ENCODE measurements at regions of chr19 and their contacts with region 1.

Region 1: GRCh38 chr19:58380722-58381466 is at the start of gene ZNF837:
- DNase-seq: peak; percentile 90 to 100 (median 98)
- ATAC-seq: peak; percentile 93
- H3K4me3 ChIP-seq: peak within 1 kb of the TSS; percentile 97
- H3K4me3 Mint-ChIP-seq: peak within 1 kb of the TSS; percentile 87 to 98 (median 91)
- H3K27ac ChIP-seq: peak within 1 kb of the TSS; percentile 96
- H3K27ac Mint-ChIP-seq: peak within 1 kb of the TSS; percentile 93 to 97 (median 97)
- H3K4me1 ChIP-seq: peaks cover 21 to 25% of the 10 kb centered on the region in 2 donors
- H3K4me1 Mint-ChIP-seq: peaks cover 23 to 40% (median 34%) of the 10 kb centered on the region in 7 donors
- H3K27me3 ChIP-seq: no peaks in the 10 kb centered on the region
- H3K27me3 Mint-ChIP-seq: no peaks in the 10 kb centered on the region
- total RNA-seq, gene ZNF837: 1.4 to 4.3 (median 2.4) TPM

Region 2: GRCh38 chr19:57279418-57280066 is 1101.4 kb before region 1 on chr19:
- CTCF ChIA-PET with region 1: no interaction called
- POLR2A ChIA-PET with region 1: no interaction called
- intact Hi-C with region 1: loop called in 1 of 2 experiments (anchors 2 kb)
- DNase-seq: peak in 6 of 9 donors; percentile 60 to 81 (median 78)
- ATAC-seq: peak; percentile 85
- H3K4me3 ChIP-seq: peak overlapping the region; percentile 80
- H3K4me3 Mint-ChIP-seq: no peak overlapping the region
- H3K27ac ChIP-seq: peak overlapping the region; percentile 98
- H3K27ac Mint-ChIP-seq: peak overlapping the region in 2 of 9 donors; percentile 6 to 51
- H3K4me1 ChIP-seq: peaks cover 18 to 23% of the 10 kb centered on the region in 2 donors
- H3K4me1 Mint-ChIP-seq: peaks cover 7 to 33% (median 25%) of the 10 kb centered on the region in 7 donors
- H3K27me3 ChIP-seq: no peaks in the 10 kb centered on the region
- H3K27me3 Mint-ChIP-seq: no peaks in the 10 kb centered on the region

Region 3: DNA sequence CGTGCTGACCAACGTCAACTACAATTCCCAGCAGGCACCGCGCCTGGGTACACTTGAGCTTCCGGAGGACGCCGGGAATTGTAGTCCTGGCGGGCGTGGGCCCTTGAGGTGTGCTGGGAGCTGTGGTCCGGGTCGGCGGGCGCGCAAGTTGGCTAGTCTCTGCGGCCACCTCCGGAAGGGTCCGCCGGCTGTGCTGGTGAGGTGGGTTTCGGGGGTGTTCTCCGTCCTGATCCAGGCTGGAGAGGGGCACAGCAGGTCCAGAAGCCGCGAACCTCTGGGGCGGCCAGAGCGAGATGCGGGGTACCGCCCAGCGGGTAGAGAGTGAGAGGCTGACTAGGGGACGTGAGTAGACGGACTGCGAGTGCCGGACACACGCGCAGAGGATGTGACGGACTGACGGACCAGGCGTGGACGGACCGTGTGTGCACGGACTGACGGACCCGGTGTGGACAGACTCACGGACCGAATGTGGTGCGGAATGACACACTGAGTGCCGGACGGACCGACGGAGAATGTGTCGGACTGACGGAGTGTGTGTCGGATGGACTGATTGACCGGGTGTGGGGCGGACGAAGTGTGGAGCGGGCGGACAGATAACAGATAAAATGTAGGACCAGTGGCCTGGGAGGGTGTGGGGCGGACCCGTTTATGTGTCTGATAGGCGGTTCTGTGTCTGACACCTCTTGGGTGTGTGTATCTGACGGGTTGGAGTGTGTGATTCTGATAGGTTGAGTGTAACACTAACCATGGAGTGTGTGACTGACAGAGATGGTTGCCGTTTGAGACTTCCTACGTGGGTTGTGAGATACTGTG is 53.8 kb before region 1 on chr19 and contains the start of gene ZSCAN22:
- CTCF ChIA-PET with region 1: no interaction called
- POLR2A ChIA-PET with region 1: no interaction called
- intact Hi-C with region 1: loop called (anchors 1 kb)
- DNase-seq: peak; percentile 65 to 89 (median 78)
- ATAC-seq: peak; percentile 90
- H3K4me3 ChIP-seq: peak within 1 kb of the TSS; percentile 95
- H3K4me3 Mint-ChIP-seq: no peak within 1 kb of the TSS
- H3K27ac ChIP-seq: peak within 1 kb of the TSS; percentile 72
- H3K27ac Mint-ChIP-seq: no peak within 1 kb of the TSS
- H3K4me1 ChIP-seq: peaks cover 14 to 16% of the 10 kb centered on the region in 2 donors
- H3K4me1 Mint-ChIP-seq: peaks cover 0 to 10% (median 6%) of the 10 kb centered on the region in 7 donors
- H3K27me3 ChIP-seq: no peaks in the 10 kb centered on the region
- H3K27me3 Mint-ChIP-seq: no peaks in the 10 kb centered on the region
- total RNA-seq, gene ZSCAN22: 1.1 to 6.0 (median 4.5) TPM

Region 4: DNA sequence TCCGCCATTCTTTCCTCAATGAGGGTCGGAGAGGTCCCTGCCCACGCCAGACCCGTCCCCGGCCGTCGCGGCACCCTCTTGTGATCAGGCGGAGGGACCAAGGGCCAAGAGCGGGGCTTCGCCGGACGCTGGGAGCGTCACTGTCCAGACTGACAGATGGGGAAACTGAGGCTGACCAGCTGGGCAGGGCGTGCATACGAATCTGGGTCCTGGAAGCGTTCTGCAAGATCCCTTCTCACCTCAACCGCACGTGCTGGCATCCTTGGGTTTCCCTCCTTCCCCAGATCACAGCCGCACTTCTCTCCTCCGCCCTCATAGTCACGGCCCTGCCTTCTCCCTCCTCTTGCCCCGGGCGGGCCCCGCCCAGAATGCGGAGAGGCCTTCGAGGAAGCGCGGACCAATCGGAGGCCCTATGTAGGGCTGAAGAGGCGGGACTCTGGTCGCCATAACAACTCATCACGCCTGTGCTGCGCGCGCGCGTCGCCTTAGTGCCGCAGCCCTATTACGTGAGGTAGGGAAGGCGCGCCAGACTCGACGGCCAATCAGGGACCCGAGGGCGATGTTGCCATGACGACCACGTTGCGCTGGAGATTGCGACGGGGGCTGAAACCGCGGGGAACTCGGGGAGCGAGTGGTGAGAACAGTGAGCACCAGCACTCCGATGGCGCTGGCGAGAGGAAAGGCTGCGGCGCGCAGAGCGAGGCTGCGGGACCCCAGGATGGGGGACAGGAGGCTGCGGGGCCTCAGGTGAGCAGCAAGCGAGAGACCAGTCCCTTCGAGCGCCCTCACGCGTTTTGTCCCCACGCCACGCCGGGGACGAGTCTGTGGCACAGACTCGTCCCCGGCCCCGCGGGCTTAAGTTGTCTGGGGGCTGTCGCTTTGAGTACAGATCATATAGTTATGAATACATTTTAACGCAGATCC is 20.3 kb after region 1 on chr19:
- CTCF ChIA-PET with region 1: no interaction called
- POLR2A ChIA-PET with region 1: interaction called, 4 read pairs
- intact Hi-C with region 1: loop called (anchors 1 kb)
- DNase-seq: peak; percentile 96 to 100 (median 98)
- ATAC-seq: peak; percentile 97
- H3K4me3 ChIP-seq: peak overlapping the region; percentile 77
- H3K4me3 Mint-ChIP-seq: peak overlapping the region; percentile 86 to 98 (median 94)
- H3K27ac ChIP-seq: peak overlapping the region; percentile 91
- H3K27ac Mint-ChIP-seq: peak overlapping the region; percentile 88 to 97 (median 94)
- H3K4me1 ChIP-seq: peaks cover 6 to 13% of the 10 kb centered on the region in 2 donors
- H3K4me1 Mint-ChIP-seq: peaks cover 6 to 19% (median 8%) of the 10 kb centered on the region in 7 donors
- H3K27me3 ChIP-seq: peaks cover 0 to 3% of the 10 kb centered on the region in 2 donors
- H3K27me3 Mint-ChIP-seq: peaks cover 5 to 20% (median 7%) of the 10 kb centered on the region in 5 donors

Region 5: DNA sequence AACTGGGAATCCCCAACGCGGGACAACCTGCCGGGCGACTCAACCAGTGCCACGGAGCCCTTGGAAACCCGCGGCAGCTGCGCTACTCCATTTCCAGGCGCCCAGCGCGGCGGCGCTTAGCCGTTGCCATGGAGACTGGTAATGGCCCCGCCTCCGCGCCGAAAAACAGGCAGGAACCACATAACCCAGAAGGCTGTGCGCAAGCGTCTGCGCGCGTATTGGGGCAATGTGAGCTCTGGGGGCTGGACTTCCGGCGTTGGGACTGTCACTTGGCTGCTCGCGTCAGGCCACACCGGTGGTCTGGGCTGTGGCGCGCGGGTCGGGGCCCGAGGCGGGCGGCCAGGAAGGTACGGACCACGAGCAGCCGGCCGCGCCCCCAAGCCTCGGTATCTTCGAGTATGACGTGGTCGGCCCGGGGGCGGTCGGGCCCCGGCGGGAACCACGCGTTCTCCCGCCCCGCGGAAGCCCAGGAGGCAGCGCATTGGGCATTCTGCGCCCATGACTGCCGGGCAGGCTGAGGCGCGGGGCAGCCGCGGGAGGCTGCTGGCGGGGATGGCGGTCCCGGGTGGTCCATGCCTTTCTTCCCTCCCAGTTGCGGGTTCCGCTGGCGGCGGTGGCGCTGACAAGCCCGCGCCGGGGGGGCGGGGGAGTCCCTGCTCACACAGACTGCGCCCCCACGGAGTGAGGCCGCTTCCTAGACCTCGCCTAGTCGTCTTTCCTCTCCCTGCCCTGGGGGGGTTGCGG is 70.6 kb after region 1 on chr19 and contains the start of gene ZNF324B:
- CTCF ChIA-PET with region 1: interaction called, 3 read pairs
- POLR2A ChIA-PET with region 1: no interaction called
- intact Hi-C with region 1: loop called (anchors 1 kb)
- DNase-seq: peak; percentile 90 to 97 (median 94)
- ATAC-seq: peak; percentile 99
- H3K4me3 ChIP-seq: peak within 1 kb of the TSS; percentile 63
- H3K4me3 Mint-ChIP-seq: peak within 1 kb of the TSS; percentile 85 to 98 (median 88)
- H3K27ac ChIP-seq: peak within 1 kb of the TSS; percentile 81
- H3K27ac Mint-ChIP-seq: peak within 1 kb of the TSS in 8 of 9 donors; percentile 2 to 90 (median 71)
- H3K4me1 ChIP-seq: peaks cover 0 to 4% of the 10 kb centered on the region in 2 donors
- H3K4me1 Mint-ChIP-seq: peaks cover 12 to 23% (median 19%) of the 10 kb centered on the region in 7 donors
- H3K27me3 ChIP-seq: no peaks in the 10 kb centered on the region
- H3K27me3 Mint-ChIP-seq: peaks cover 8 to 26% (median 17%) of the 10 kb centered on the region in 5 donors
- total RNA-seq, gene ZNF324B: 9.1 to 13.9 (median 11.8) TPM

Region 6: DNA sequence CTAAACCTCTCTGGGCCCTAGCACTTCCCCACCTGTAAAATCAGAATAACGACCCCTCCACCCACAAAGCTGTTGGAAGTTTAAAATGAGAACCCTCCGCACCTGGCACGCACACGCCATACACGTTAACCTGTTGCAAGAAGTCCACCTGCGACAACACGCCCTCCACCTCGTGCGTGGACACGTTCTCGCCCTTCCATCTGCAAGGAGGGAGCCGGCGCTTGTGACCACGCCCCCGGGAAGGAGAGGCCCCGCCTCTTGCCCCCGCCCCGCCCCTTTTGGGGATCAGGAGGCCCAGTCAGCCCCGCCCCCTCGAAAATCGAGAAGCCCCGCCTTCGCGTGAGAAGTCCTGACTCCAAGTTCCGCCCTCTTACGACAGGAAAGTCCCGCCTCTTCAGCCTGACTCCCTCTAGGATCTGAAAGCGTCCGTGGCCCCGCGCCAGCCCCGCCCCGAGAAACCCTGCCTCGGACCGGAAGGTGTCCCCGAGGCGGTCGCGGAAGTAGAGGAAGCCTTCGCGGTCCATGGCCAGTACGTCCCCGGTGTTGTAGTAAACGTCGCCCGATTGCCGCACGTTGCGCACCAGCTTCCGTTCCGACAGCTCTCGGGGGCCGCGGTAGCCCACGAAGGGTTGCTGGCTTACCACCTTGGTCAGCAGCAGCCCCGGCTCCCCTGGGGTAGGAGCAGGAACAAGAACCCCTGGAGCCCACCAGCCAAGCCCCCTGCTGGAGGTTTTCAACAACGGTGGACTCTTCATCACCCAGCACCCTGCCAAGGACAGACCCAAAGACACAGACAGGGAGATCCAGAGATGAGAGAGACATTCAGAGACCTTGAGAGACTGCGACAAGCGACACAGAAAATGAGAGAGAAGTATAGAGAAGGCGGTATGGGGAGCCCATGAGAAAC is 118.4 kb after region 1 on chr19:
- CTCF ChIA-PET with region 1: no interaction called
- POLR2A ChIA-PET with region 1: interaction called, 3 read pairs
- intact Hi-C with region 1: loop called in 1 of 2 experiments (anchors 1 kb)
- DNase-seq: peak; percentile 76 to 96 (median 87)
- ATAC-seq: peak; percentile 93
- H3K4me3 ChIP-seq: peak overlapping the region; percentile 66
- H3K4me3 Mint-ChIP-seq: peak overlapping the region; percentile 88 to 98 (median 94)
- H3K27ac ChIP-seq: peak overlapping the region; percentile 72
- H3K27ac Mint-ChIP-seq: peak overlapping the region; percentile 90 to 97 (median 95)
- H3K4me1 ChIP-seq: peaks cover 12 to 15% of the 10 kb centered on the region in 2 donors
- H3K4me1 Mint-ChIP-seq: peaks cover 8 to 32% (median 21%) of the 10 kb centered on the region in 7 donors
- H3K27me3 ChIP-seq: no peaks in the 10 kb centered on the region
- H3K27me3 Mint-ChIP-seq: no peaks in the 10 kb centered on the region

Region 7: DNA sequence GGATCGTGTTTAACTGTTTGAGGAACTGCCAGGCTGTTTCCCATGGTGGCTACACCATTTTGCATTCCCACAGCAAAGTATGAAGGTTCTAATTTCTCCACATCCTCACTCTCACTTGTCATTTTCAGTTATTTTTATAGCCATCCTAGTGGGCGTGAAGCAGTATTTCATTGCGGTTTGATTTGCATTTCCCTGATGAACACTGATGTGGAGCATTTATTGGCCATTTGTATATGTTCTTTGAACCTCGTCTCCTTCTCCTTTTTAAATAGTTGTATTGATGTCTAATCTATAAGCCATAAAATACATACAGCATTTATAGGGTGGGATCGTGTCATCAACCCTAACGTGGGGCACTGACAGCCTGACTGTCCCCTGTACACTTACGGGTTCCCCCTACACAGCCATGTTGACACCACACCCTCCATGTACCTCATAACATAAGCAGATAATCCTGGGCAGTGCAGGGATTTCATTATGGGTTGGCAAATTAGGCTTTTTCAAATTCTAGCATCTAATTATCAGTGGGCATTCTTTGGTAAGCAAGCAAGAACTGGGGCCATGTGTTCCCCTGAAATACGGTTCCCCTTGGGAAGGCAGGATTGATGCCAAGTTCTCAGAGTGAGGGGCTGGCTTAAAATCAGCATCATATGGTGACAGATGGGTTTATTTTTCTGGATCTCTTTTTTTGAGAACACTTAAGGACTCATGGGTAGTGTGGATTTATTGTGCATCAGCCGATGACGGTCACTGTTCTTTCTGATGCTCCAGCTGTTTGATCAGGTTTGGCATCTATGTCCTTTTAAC is 150.3 kb after region 1 on chr19:
- CTCF ChIA-PET with region 1: no interaction called
- POLR2A ChIA-PET with region 1: no interaction called
- intact Hi-C with region 1: no loop called
- DNase-seq: no peak
- ATAC-seq: no peak
- H3K4me3 ChIP-seq: no peak overlapping the region
- H3K4me3 Mint-ChIP-seq: no peak overlapping the region
- H3K27ac ChIP-seq: no peak overlapping the region
- H3K27ac Mint-ChIP-seq: no peak overlapping the region
- H3K4me1 ChIP-seq: no peaks in the 10 kb centered on the region
- H3K4me1 Mint-ChIP-seq: no peaks in the 10 kb centered on the region
- H3K27me3 ChIP-seq: no peaks in the 10 kb centered on the region
- H3K27me3 Mint-ChIP-seq: peaks cover 0 to 7% (median 0%) of the 10 kb centered on the region in 5 donors

Region 8: DNA sequence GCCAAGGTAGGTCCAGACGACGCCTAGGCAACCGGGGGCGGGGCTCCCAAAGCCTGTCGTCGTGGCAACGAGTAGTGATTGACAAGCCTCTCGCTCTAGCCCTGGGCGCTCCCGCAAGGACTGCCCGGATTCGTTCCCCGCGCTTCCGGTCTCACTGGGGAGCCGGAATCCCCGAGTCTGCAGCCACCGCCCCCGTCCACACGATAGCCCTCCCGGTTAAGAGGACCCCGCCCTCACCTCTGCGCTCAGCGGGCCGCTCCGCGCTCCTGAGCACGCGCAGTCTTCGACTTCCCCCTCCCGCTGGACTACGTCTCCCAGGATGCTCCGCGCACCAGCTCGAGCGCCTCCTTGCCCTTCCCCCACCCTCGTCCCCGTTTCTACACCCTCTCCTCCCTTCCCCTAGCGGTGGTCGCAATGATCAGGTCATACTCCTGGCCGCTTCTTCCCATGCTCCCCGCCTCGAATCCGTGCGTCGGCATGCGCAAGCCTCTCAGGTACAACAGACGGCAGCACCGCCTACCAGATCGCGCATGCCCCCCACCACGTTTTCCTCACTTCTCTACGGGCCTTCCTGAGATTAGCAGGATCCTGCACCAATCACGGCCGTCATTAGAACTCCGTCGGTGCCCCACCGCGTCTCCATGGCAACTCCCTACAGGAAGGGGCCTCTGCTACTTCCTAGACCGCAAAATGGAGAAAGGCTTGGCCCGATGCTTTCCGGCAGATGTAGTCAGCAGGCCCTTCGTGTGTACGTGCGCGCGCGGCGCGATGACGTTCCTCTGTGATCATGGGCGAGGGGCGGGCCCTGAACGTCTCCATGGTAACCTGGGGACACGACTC is 192.1 kb after region 1 on chr19 and contains the start of gene MZF1:
- CTCF ChIA-PET with region 1: no interaction called
- POLR2A ChIA-PET with region 1: no interaction called
- intact Hi-C with region 1: loop called in 1 of 2 experiments (anchors 1 kb)
- DNase-seq: peak; percentile 97 to 100 (median 100)
- ATAC-seq: peak; percentile 81
- H3K4me3 ChIP-seq: peak within 1 kb of the TSS; percentile 71
- H3K4me3 Mint-ChIP-seq: peak within 1 kb of the TSS; percentile 82 to 100 (median 98)
- H3K27ac ChIP-seq: peak within 1 kb of the TSS; percentile 97
- H3K27ac Mint-ChIP-seq: peak within 1 kb of the TSS; percentile 97 to 100 (median 100)
- H3K4me1 ChIP-seq: peaks cover 19 to 20% of the 10 kb centered on the region in 2 donors
- H3K4me1 Mint-ChIP-seq: peaks cover 27 to 50% (median 33%) of the 10 kb centered on the region in 7 donors
- H3K27me3 ChIP-seq: no peaks in the 10 kb centered on the region
- H3K27me3 Mint-ChIP-seq: peaks cover 0 to 4% (median 0%) of the 10 kb centered on the region in 5 donors
- total RNA-seq, gene MZF1: 35.0 to 51.8 (median 44.9) TPM

Measured in naive thymus-derived CD4-positive, alpha-beta T cell (primary cell).